CD8-positive, alpha-beta memory T cell (primary cell): ENCODE measurements at regions of chr2 and their contacts with region 1.

Region 1: DNA sequence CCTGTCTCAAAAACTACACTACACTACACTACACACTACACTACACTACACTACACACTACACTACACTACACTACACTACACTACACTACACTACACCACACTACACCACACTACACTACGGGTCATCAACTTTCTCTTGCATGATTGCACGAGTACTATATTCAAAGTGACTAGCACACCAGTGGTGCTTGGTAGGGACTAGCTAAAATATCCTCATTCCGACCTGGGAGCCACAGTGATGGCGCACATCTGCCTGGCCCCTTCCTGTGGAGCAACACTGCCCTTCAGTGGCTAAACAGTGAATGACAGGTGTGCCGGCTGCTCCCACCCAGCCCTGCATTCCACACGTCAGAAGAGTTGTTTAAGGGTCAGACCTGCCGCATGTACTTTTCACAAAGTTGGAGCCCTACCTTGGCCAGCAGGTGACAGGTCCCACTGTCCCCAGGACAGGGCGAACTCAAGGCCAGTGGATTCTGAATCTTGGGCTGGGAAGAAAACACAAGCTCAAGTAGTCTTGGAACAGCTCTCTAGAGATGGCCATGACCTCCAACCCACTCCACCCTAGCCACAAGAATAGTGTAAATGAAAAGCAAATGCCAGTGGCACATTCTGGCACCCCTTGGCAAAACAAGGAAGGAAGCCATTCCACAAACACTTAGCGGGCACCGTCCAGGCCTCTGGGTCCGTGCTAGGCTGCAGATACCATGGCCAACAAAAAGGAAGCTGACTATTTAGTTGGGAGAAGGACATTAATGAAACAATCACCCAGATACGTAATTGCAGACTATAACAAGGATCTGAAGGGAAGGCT is 79.7 kb upstream of the MSH2 start:
- DNase-seq: peak; percentile 26 to 57 (median 32)
- H3K4me3 ChIP-seq: no peak overlapping the region
- H3K4me3 Mint-ChIP-seq: no peak overlapping the region
- H3K27ac ChIP-seq: no peak overlapping the region
- H3K27ac Mint-ChIP-seq: no peak overlapping the region
- H3K4me1 ChIP-seq: no peaks in the 10 kb centered on the region
- H3K4me1 Mint-ChIP-seq: no peaks in the 10 kb centered on the region
- H3K27me3 ChIP-seq: no peaks in the 10 kb centered on the region
- H3K27me3 Mint-ChIP-seq: peaks cover 3 to 26% of the 10 kb centered on the region in 2 donors

Region 2: GRCh38 chr2:46988733-46989481 is 334.3 kb before region 1 on chr2:
- CTCF ChIA-PET with region 1: interaction called, 10 read pairs
- POLR2A ChIA-PET with region 1: no interaction called
- DNase-seq: no peak
- H3K4me3 ChIP-seq: no peak overlapping the region
- H3K4me3 Mint-ChIP-seq: no peak overlapping the region
- H3K27ac ChIP-seq: no peak overlapping the region
- H3K27ac Mint-ChIP-seq: no peak overlapping the region
- H3K4me1 ChIP-seq: peaks cover 19% of the 10 kb centered on the region
- H3K4me1 Mint-ChIP-seq: peaks cover 19 to 35% (median 25%) of the 10 kb centered on the region in 3 donors
- H3K27me3 ChIP-seq: no peaks in the 10 kb centered on the region
- H3K27me3 Mint-ChIP-seq: no peaks in the 10 kb centered on the region

Region 3: DNA sequence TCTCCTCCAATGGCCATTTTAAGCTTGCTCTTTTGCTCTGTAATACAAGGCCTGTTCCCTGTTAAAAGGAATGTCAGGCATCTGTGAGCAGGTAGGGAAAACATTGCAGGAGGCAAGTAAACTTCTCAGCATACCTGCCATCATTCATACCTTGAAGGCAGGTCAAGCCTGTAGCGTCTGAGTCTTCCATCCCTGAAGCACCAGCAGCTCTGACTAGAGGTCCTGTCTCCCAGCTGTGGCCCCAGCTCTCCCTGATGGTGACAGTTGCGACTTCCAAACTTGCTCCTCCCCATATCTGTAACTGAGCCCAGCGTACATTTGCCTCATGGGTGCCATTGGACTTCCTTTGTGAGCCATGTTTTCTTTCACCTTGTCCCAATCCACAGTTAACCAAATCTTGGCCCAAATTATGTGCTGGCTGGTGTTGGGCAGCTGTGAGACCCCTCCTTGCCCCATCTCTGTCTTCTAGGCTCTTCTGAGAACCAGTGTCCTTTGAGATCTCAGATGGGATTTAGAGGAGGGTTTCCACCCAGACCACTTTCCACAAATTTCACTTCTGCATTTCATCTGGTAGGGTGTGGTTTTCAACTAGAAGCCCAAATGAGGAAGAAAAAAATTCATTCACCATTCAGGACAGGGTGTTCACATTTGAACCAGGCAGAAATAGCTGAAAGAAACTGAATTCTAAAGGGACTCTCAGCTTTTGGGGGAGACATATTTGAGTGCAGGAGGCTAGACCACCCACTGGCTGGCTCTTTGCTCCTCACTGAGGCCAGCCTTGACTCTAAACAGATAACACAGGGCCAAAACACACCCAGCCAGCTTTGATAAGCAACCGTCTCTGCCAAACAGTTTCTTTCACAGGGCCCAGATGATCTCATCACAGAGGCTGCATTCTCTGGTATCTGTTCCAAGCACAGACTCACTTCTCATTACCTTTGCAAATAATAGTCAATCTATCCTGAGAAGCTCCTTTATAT is 13.3 kb after region 1 on chr2:
- CTCF ChIA-PET with region 1: interaction called, 13 read pairs
- POLR2A ChIA-PET with region 1: no interaction called
- DNase-seq: no peak
- H3K4me3 ChIP-seq: no peak overlapping the region
- H3K4me3 Mint-ChIP-seq: no peak overlapping the region
- H3K27ac ChIP-seq: peak overlapping the region; percentile 31
- H3K27ac Mint-ChIP-seq: no peak overlapping the region
- H3K4me1 ChIP-seq: no peaks in the 10 kb centered on the region
- H3K4me1 Mint-ChIP-seq: peaks cover 0 to 3% (median 0%) of the 10 kb centered on the region in 3 donors
- H3K27me3 ChIP-seq: no peaks in the 10 kb centered on the region
- H3K27me3 Mint-ChIP-seq: peaks cover 6 to 19% of the 10 kb centered on the region in 2 donors